ENCODE measurements at regions of chr9 and their contacts with region 1.

Region 1: GRCh38 chr9:92439921-92440750 is 15.9 kb upstream of the OMD start:
- DNase-seq: no peak
- ATAC-seq: peak; percentile 99 to 100 (median 100)
- H3K4me3 ChIP-seq: no peak overlapping the region
- H3K27ac ChIP-seq: peak overlapping the region; percentile 56
- H3K4me1 ChIP-seq: peaks cover 8% of the 10 kb centered on the region
- H3K27me3 ChIP-seq: no peaks in the 10 kb centered on the region
- CTCF ChIP-seq: no peak

Region 2: DNA sequence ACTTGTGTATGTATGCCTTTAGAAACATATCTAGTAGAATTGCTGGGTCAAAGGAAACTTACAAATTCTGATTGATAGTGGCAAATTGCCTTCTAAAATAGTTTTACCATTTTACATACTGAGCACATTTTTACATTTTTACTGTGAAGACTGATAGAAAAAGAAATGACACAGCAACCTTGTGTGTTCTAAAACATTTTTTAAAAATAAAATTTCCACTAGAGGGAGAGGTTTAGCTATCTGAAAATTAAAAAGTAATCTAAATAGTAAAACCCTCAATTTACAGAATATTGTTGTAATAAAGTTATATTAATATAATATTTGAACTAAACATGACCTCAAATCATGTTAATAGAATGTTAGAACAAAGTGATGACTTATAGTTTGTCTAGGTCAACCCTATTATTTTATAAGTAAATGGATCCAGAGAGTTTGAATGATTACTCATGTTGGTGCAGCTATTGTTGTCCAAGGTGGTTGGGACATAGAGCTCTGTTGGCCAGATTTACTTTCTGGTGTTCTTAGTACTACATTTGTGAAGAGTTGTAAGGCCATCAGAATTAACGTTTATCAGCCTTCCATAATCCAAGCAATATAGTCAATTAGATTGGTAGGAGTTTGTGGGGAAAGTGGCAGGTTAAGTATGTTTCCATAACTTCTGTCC is 97.2 kb before region 1 on chr9:
- intact Hi-C with region 1: loop called in 1 of 2 experiments (anchors 5 kb)
- DNase-seq: no peak
- ATAC-seq: no peak
- H3K4me3 ChIP-seq: no peak overlapping the region
- H3K27ac ChIP-seq: no peak overlapping the region
- H3K4me1 ChIP-seq: no peaks in the 10 kb centered on the region
- H3K27me3 ChIP-seq: no peaks in the 10 kb centered on the region
- CTCF ChIP-seq: peak; percentile 24

Region 3: DNA sequence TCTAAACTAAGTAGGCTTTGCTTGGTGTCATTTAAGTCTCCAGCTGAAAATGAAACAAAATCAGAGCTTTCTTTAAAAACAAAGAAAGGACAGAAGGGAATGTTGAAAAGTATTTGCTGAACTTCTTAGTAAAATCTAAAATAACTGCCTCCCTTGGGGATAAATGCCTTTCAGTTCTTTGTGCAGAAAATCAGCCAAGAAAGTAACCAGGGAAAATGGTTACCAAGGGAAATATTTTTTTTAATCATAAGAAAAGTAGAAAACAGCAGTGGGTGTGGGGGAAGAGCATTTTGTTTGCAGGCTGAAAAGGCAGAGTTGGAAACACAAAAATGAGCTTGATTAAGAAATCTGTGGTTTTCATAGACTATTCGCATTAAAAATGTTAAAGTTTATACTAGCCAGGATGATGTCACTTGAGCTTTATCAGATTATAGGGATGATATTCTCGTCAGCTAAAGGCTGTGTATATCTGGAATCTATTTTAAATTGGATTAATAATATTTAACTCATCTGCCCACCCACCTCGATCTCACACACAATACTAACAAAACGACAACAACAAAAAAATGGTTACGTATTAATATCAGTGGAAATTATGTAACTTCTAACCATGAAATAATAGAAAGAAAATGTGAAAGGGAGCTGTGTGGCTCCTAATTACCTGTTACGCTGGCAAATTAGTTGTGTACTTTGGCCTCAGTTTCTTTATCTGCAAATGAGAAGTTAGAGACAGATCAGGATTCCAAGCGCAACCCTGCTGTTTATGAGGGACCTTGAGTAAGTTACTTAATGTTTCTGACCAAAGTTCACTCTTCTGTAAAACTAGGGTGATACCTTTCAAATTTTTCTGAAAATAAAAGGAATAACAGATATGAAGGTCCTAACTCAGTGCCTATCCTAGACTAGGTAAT is 96.1 kb after region 1 on chr9 and contains the start of gene ECM2:
- intact Hi-C with region 1: no loop called
- DNase-seq: no peak
- ATAC-seq: peak in 1 of 4 donors; percentile 19
- H3K4me3 ChIP-seq: peak within 1 kb of the TSS; percentile 40
- H3K27ac ChIP-seq: peak within 1 kb of the TSS; percentile 31
- H3K4me1 ChIP-seq: no peaks in the 10 kb centered on the region
- H3K27me3 ChIP-seq: no peaks in the 10 kb centered on the region
- CTCF ChIP-seq: no peak
- total RNA-seq, gene ECM2: 1.9 to 7.8 (median 3.2) TPM

Measured in psoas muscle (tissue), 8 donors.